Heart left ventricle (tissue), 16 donors: ENCODE measurements at regions of chr20 and their contacts with region 1.

Region 1: DNA sequence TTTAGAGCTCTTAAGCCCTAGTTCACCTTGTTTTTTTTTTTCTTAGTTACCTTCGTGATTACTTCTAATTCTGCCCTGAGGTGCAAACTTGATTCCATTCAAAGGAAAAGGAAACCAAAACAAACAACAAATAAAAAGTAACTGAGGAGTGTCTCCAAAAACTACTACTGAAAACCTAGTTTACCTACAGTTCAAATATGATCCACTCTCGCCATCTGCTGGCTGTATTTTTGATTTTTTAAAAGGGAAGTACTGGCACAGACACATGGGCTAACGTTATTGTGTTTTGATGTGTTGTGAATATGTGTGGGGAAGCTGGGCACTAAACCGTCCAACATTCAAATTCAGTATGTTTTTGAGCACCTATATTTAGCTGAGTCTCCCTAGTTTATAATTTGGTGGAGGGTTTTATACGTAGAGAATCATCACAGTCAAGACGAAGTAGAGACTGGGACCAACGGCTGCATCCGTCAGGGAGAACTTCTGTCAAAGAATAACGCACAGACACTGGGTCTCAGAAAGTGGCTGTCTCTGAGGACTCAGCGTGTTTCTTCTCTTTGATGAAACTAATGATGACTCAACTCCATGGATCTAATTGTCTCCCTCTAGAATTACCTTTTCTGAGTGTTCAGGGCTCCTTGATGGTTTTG is 373.5 kb upstream of the BTBD3 start:
- DNase-seq: peak in 2 of 5 donors; percentile 22 to 31
- ATAC-seq: peak; percentile 47 to 66 (median 60)
- H3K4me3 ChIP-seq: peak overlapping the region in 2 of 12 donors; percentile 22 to 25
- H3K27ac ChIP-seq: no peak overlapping the region
- H3K4me1 ChIP-seq: peaks cover 0 to 10% (median 0%) of the 10 kb centered on the region in 12 donors
- H3K27me3 ChIP-seq: no peaks in the 10 kb centered on the region
- CTCF ChIP-seq: peak; percentile 49 to 81 (median 66)
- POLR2A ChIP-seq: no peak

Region 2: GRCh38 chr20:9978397-9979004 is 1565.7 kb before region 1 on chr20:
- intact Hi-C with region 1: loop called in 9 of 10 experiments (anchors 2 to 10 kb)
- DNase-seq: peak in 2 of 5 donors; percentile 32 to 40
- ATAC-seq: peak; percentile 58 to 91 (median 88)
- H3K4me3 ChIP-seq: no peak overlapping the region
- H3K27ac ChIP-seq: no peak overlapping the region
- H3K4me1 ChIP-seq: peaks cover 0 to 9% (median 0%) of the 10 kb centered on the region in 12 donors
- H3K27me3 ChIP-seq: no peaks in the 10 kb centered on the region
- CTCF ChIP-seq: peak; percentile 54 to 92 (median 78)
- POLR2A ChIP-seq: no peak

Region 3: DNA sequence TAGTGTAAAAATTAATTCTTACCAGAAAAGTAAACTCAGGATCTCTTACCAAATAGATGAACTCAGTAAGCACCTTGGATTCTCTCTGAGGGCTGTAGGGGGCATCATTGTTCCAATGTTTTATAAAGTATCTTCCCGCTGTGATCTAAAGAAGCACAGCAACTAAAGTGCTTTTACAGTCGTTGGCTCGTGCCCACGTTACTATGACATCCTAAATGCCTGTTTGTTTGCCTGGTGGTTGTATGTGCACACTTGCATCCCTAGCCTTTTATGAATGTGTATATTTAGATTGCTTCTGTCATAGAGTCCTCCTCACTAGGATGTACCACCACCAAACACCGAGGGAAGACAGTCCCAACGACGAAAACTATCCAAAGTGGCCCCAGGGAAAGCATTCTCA is 1074.6 kb before region 1 on chr20:
- intact Hi-C with region 1: loop called in 9 of 10 experiments (anchors 2 to 10 kb)
- DNase-seq: peak in 3 of 5 donors; percentile 43 to 48 (median 44)
- ATAC-seq: peak; percentile 72 to 82 (median 80)
- H3K4me3 ChIP-seq: no peak overlapping the region
- H3K27ac ChIP-seq: peak overlapping the region in 1 of 12 donors; percentile 50
- H3K4me1 ChIP-seq: peaks cover 0 to 62% (median 34%) of the 10 kb centered on the region in 12 donors
- H3K27me3 ChIP-seq: no peaks in the 10 kb centered on the region
- CTCF ChIP-seq: peak; percentile 49 to 80 (median 68)
- POLR2A ChIP-seq: no peak

Region 4: GRCh38 chr20:10536531-10536930 is 1007.6 kb before region 1 on chr20:
- intact Hi-C with region 1: loop called in 1 of 10 experiments (anchors 10 kb)
- DNase-seq: no peak
- ATAC-seq: no peak
- H3K4me3 ChIP-seq: no peak overlapping the region
- H3K27ac ChIP-seq: no peak overlapping the region
- H3K4me1 ChIP-seq: peaks cover 0 to 15% (median 5%) of the 10 kb centered on the region in 12 donors
- H3K27me3 ChIP-seq: no peaks in the 10 kb centered on the region
- CTCF ChIP-seq: peak in 6 of 12 donors; percentile 15 to 39 (median 36)
- POLR2A ChIP-seq: no peak

Region 5: GRCh38 chr20:10654630-10655029 is 889.5 kb before region 1 on chr20:
- intact Hi-C with region 1: loop called in 1 of 10 experiments (anchors 10 kb)
- DNase-seq: no peak
- ATAC-seq: peak; percentile 27 to 29 (median 28)
- H3K4me3 ChIP-seq: peak overlapping the region in 1 of 12 donors; percentile 9
- H3K27ac ChIP-seq: peak overlapping the region in 11 of 12 donors; percentile 54 to 80 (median 65)
- H3K4me1 ChIP-seq: peaks cover 11 to 99% (median 77%) of the 10 kb centered on the region in 12 donors
- H3K27me3 ChIP-seq: no peaks in the 10 kb centered on the region
- CTCF ChIP-seq: no peak
- POLR2A ChIP-seq: no peak

Region 6: GRCh38 chr20:11274141-11274594 is 270.0 kb before region 1 on chr20:
- intact Hi-C with region 1: loop called in 1 of 10 experiments (anchors 10 kb)
- DNase-seq: peak in 3 of 5 donors; percentile 35 to 44 (median 35)
- ATAC-seq: peak; percentile 61 to 91 (median 90)
- H3K4me3 ChIP-seq: no peak overlapping the region
- H3K27ac ChIP-seq: no peak overlapping the region
- H3K4me1 ChIP-seq: peaks cover 0 to 10% (median 2%) of the 10 kb centered on the region in 12 donors
- H3K27me3 ChIP-seq: no peaks in the 10 kb centered on the region
- CTCF ChIP-seq: peak; percentile 40 to 84 (median 72)
- POLR2A ChIP-seq: no peak